CD4-positive, alpha-beta memory T cell (primary cell): ENCODE measurements at regions of chr6 and their contacts with region 1.

Region 1: GRCh38 chr6:16657768-16658167 is 103.5 kb downstream of the ATXN1 start:
- DNase-seq: peak in 3 of 5 donors; percentile 29 to 43 (median 31)
- H3K4me3 ChIP-seq: no peak overlapping the region
- H3K4me3 Mint-ChIP-seq: peak overlapping the region; percentile 55 to 85 (median 68)
- H3K27ac ChIP-seq: peak overlapping the region; percentile 44
- H3K27ac Mint-ChIP-seq: peak overlapping the region; percentile 77 to 95 (median 92)
- H3K4me1 ChIP-seq: peaks cover 75% of the 10 kb centered on the region
- H3K4me1 Mint-ChIP-seq: peaks cover 59 to 78% (median 66%) of the 10 kb centered on the region in 4 donors
- H3K27me3 ChIP-seq: no peaks in the 10 kb centered on the region
- H3K27me3 Mint-ChIP-seq: no peaks in the 10 kb centered on the region

Region 2: GRCh38 chr6:16670183-16670582 is 12.4 kb after region 1 on chr6:
- CTCF ChIA-PET with region 1: interaction called, 12 read pairs
- POLR2A ChIA-PET with region 1: interaction called, 15 read pairs
- intact Hi-C with region 1: loop called (anchors 1 kb)
- DNase-seq: no peak
- H3K4me3 ChIP-seq: no peak overlapping the region
- H3K4me3 Mint-ChIP-seq: peak overlapping the region; percentile 21 to 91 (median 76)
- H3K27ac ChIP-seq: peak overlapping the region; percentile 35
- H3K27ac Mint-ChIP-seq: peak overlapping the region; percentile 74 to 96 (median 92)
- H3K4me1 ChIP-seq: peaks cover 61% of the 10 kb centered on the region
- H3K4me1 Mint-ChIP-seq: peaks cover 50 to 69% (median 55%) of the 10 kb centered on the region in 4 donors
- H3K27me3 ChIP-seq: no peaks in the 10 kb centered on the region
- H3K27me3 Mint-ChIP-seq: no peaks in the 10 kb centered on the region